ENCODE measurements at regions of chr6 and their contacts with region 1.

Region 1: GRCh38 chr6:68533339-68533795 is 101.7 kb upstream of the ADGRB3 start:
- DNase-seq: no peak
- ATAC-seq: no peak
- H3K4me3 ChIP-seq: no peak overlapping the region
- H3K27ac ChIP-seq: no peak overlapping the region
- H3K4me1 ChIP-seq: no peaks in the 10 kb centered on the region
- H3K27me3 ChIP-seq: no peaks in the 10 kb centered on the region
- CTCF ChIP-seq: no peak

Region 2: GRCh38 chr6:67068781-67069180 is 1464.6 kb before region 1 on chr6:
- intact Hi-C with region 1: loop called in 1 of 10 experiments (anchors 10 kb)
- DNase-seq: no peak
- ATAC-seq: no peak
- H3K4me3 ChIP-seq: no peak overlapping the region
- H3K27ac ChIP-seq: no peak overlapping the region
- H3K4me1 ChIP-seq: no peaks in the 10 kb centered on the region
- H3K27me3 ChIP-seq: no peaks in the 10 kb centered on the region
- CTCF ChIP-seq: no peak

Region 3: GRCh38 chr6:68628161-68628560 is 94.8 kb after region 1 on chr6:
- intact Hi-C with region 1: no loop called
- DNase-seq: no peak
- ATAC-seq: no peak
- H3K4me3 ChIP-seq: no peak overlapping the region
- H3K27ac ChIP-seq: no peak overlapping the region
- H3K4me1 ChIP-seq: peaks cover 0 to 5% (median 0%) of the 10 kb centered on the region in 9 donors
- H3K27me3 ChIP-seq: peaks cover 0 to 15% (median 0%) of the 10 kb centered on the region in 7 donors
- CTCF ChIP-seq: no peak